ENCODE measurements at regions of chr16 and their contacts with region 1.

Region 1: GRCh38 chr16:82263521-82264143 is 93.6 kb upstream of the MPHOSPH6 start:
- DNase-seq: peak; percentile 50
- H3K4me3 Mint-ChIP-seq: no peak overlapping the region
- H3K27ac Mint-ChIP-seq: no peak overlapping the region
- H3K4me1 Mint-ChIP-seq: no peaks in the 10 kb centered on the region
- H3K27me3 Mint-ChIP-seq: peaks cover 9% of the 10 kb centered on the region

Region 2: GRCh38 chr16:82169861-82170845 is 93.5 kb before region 1 on chr16 and contains the start of gene MPHOSPH6:
- CTCF ChIA-PET with region 1: no interaction called
- POLR2A ChIA-PET with region 1: no interaction called
- DNase-seq: peak; percentile 93
- H3K4me3 Mint-ChIP-seq: peak within 1 kb of the TSS; percentile 91
- H3K27ac Mint-ChIP-seq: peak within 1 kb of the TSS; percentile 89
- H3K4me1 Mint-ChIP-seq: peaks cover 21% of the 10 kb centered on the region
- H3K27me3 Mint-ChIP-seq: peaks cover 34% of the 10 kb centered on the region
- total RNA-seq, gene MPHOSPH6: 27.1 to 28.7 TPM

Region 3: DNA sequence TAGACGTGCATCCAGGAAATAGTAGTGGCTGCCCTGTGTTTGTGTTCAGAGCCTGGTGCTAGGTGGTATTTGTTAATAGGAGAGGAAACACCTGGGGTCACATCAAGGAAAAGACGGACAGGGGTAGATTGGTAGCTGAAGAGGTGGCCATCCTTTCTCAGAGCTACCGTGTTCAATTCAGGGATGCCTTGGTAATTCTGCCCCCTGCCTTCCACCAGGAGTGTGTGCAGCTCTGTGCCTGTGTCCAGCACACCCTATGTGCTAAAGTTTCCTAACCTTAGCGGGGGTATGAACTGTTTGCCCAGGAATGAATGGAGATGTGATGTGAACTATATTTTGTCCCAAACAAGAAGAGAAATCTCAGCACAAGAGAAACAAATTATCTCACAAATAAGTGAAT is 80.5 kb after region 1 on chr16:
- CTCF ChIA-PET with region 1: interaction called, 10 read pairs
- POLR2A ChIA-PET with region 1: no interaction called
- DNase-seq: no peak
- H3K4me3 Mint-ChIP-seq: no peak overlapping the region
- H3K27ac Mint-ChIP-seq: no peak overlapping the region
- H3K4me1 Mint-ChIP-seq: no peaks in the 10 kb centered on the region
- H3K27me3 Mint-ChIP-seq: no peaks in the 10 kb centered on the region

Region 4: GRCh38 chr16:82400046-82400445 is 136.4 kb after region 1 on chr16:
- CTCF ChIA-PET with region 1: no interaction called
- POLR2A ChIA-PET with region 1: no interaction called
- DNase-seq: no peak
- H3K4me3 Mint-ChIP-seq: no peak overlapping the region
- H3K27ac Mint-ChIP-seq: no peak overlapping the region
- H3K4me1 Mint-ChIP-seq: no peaks in the 10 kb centered on the region
- H3K27me3 Mint-ChIP-seq: peaks cover 4% of the 10 kb centered on the region

Region 5: DNA sequence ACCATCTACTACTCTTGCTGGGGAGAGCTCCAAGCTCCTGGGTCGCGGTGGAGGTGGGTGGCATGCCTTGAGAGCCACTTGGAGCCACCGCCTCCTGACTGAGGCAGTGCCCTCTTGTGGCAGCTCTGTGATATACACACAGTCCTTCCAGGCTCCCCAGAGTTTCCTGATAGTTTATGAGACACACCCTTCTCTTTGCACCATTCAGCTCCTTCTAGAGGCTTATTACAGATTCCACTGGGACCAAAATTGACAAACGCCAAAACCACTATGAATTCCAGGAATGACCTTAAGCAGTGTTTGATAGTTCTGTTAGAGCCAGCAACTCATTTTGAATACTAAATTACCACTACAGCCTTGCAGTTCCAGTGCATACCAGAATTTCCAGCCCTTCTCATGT is 193.1 kb after region 1 on chr16:
- CTCF ChIA-PET with region 1: interaction called, 24 read pairs
- POLR2A ChIA-PET with region 1: no interaction called
- DNase-seq: peak; percentile 42
- H3K4me3 Mint-ChIP-seq: no peak overlapping the region
- H3K27ac Mint-ChIP-seq: no peak overlapping the region
- H3K4me1 Mint-ChIP-seq: no peaks in the 10 kb centered on the region
- H3K27me3 Mint-ChIP-seq: no peaks in the 10 kb centered on the region

Region 6: GRCh38 chr16:83215406-83216001 is 951.9 kb after region 1 on chr16:
- CTCF ChIA-PET with region 1: interaction called, 16 read pairs
- POLR2A ChIA-PET with region 1: no interaction called
- DNase-seq: peak; percentile 56
- H3K4me3 Mint-ChIP-seq: no peak overlapping the region
- H3K27ac Mint-ChIP-seq: no peak overlapping the region
- H3K4me1 Mint-ChIP-seq: no peaks in the 10 kb centered on the region
- H3K27me3 Mint-ChIP-seq: no peaks in the 10 kb centered on the region

Measured in activated CD4-positive, alpha-beta memory T cell treated with anti-CD3 and anti-CD28 coated beads, Interleukin-2, amount 10 ng/mL, durations not matched to agents 7 days and 5 days (primary cell).